ENCODE measurements at regions of chr6 and their contacts with region 1.

Region 1: DNA sequence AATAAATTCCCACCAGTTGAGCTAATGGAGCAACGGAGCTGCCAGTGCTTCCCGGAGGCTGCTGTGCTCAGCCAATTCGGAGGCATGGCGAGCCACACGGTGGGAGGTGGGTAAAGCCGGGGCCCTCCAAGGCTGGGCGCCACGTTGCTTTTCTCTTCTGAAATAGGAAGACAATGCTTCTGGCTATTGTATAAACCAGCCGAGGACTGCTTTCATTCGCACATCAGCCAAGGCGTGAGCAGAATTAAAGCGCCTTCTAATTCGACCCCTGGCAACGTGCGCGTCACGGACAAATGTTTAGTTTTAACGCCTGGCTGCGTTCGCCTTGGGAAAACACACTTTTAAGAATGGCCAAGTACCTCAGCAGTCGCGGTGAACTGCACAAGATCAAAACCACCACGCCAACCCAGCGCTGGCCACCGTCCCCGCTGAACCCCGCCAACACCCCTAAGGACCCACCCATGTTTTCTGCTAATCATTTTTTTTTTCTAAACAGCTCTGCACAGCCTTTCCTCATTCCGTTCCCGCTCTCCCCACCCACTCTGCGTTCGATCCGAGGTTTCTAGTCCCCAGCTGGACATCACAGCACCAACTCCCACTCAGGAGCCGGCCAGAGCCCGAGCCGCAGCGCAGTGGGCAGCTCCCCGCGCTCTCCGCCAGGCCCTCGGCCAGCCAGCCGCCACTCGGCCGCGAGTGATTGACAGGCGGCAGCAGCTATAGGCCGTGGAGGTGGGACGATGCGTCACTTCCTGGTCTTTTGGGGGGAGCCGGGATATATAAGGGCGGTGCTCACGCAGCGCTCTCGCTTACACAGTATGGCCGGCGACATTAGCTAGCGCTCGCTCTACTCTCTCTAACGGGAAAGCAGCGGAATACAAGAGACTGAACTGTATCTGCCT is at the start of gene AMD1:
- DNase-seq: peak; percentile 94
- H3K4me3 Mint-ChIP-seq: peak within 1 kb of the TSS; percentile 95
- H3K27ac Mint-ChIP-seq: peak within 1 kb of the TSS; percentile 98
- H3K4me1 Mint-ChIP-seq: peaks cover 26% of the 10 kb centered on the region
- H3K27me3 Mint-ChIP-seq: no peaks in the 10 kb centered on the region
- total RNA-seq, gene AMD1: 111 TPM in 2 replicates

Region 2: DNA sequence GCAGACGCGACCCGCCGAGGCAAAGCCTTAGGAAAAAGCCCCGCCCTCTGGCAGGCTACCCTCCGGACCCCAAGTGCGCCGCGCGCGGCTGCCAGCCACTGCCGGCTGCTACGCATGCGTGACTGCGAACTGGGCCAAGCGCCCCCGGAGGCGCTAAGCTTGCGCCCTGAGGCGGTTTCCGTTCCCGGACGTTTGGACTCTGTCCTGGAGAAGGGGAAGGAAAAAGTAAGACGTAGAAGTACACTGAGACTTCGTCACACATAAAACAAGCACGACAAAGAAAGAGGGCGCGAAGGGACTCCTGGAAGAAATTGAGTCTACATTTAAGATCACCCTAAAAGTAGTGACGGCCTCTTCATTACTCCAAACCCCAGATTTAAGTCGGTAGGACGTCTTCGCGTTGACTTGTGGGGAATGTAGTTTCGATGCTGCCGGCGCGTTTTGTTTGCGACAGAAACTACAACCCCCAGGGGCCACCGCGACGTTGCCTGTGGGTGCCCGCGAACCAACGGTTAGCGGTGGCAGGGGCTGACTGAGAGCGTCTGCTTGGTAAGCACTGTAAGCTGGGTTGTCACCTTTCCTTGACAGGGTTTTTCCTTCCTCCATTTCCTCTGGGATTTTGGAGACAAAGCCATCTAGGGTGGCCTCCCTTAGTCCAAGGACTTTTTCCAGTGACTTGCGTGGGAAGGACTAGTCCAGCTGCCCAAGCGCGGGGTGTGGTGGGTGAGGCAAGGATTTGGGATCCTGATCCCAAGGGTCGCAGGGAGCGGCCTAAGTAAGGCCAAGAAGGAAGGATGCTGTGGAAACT is 1779.0 kb before region 1 on chr6 and contains the start of gene CEP57L1:
- intact Hi-C with region 1: loop called (anchors 10 kb)
- DNase-seq: peak; percentile 92
- H3K4me3 Mint-ChIP-seq: peak within 1 kb of the TSS; percentile 93
- H3K27ac Mint-ChIP-seq: peak within 1 kb of the TSS; percentile 99
- H3K4me1 Mint-ChIP-seq: peaks cover 45% of the 10 kb centered on the region
- H3K27me3 Mint-ChIP-seq: no peaks in the 10 kb centered on the region
- total RNA-seq, gene CEP57L1: 18.2 and 25.4 TPM in 2 replicates

Region 3: DNA sequence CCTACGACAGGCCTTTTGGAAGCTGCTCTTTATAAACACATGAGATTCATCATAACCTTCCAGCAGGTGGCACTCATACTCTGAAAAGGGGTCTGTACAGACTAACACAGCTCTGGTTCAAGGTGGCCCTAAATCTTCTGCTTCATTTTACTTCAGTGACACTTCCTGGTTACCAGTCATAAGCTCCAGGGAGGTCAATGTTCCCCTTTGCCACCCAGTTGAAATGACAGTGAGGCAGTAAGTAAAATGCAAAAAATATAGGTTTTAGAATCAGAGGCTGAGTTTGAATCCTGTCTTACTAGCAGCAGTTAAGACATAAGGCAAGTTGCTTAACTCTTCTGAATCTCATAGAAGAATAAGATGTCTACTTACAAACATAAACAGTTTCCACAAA is 191.8 kb before region 1 on chr6:
- intact Hi-C with region 1: loop called (anchors 1 kb)
- DNase-seq: peak; percentile 40
- H3K4me3 Mint-ChIP-seq: no peak overlapping the region
- H3K27ac Mint-ChIP-seq: peak overlapping the region; percentile 62
- H3K4me1 Mint-ChIP-seq: peaks cover 30% of the 10 kb centered on the region
- H3K27me3 Mint-ChIP-seq: no peaks in the 10 kb centered on the region

Region 4: DNA sequence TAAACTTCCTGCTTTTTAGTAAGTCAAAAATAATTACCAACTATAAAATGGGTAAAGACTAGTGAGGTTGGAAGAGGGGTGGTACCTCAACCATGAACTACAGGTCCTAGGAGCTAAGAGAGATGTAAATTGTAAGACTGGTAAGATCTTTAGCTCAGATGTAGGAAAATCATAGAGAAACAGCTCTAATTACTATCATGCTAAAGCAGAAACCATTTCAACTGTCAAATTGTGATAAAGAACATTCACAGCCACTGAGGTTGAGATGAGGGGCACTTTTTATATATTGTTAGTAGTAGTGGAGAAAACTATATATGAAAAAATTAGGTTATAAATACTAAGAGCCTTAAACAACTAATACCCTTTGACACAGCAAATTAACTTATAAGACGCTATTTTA is 79.0 kb before region 1 on chr6:
- intact Hi-C with region 1: no loop called
- DNase-seq: no peak
- H3K4me3 Mint-ChIP-seq: no peak overlapping the region
- H3K27ac Mint-ChIP-seq: no peak overlapping the region
- H3K4me1 Mint-ChIP-seq: no peaks in the 10 kb centered on the region
- H3K27me3 Mint-ChIP-seq: no peaks in the 10 kb centered on the region

Region 5: DNA sequence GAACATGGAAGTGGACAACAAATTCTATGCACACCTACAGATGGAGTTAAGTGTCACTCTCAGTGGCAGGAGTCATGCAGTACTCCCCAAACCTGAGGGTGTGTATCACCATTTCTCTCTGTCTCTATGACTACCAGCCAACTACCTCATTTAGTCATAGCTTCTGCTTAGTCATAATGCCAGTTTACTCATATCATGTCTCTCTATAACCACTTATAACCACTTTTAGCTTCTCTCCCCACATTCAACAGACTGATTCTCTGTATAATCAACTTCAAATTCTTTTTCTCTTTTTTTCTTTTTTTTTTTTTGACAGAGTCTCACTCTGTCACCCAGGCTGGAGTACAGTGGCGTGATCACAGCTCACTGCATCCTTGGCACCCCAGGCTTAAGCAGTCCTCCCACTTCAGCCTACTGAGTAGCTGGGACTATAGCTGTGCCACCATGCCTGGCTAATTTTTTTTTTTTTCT is 70.5 kb after region 1 on chr6:
- intact Hi-C with region 1: loop called (anchors 1 kb)
- DNase-seq: peak; percentile 44
- H3K4me3 Mint-ChIP-seq: peak overlapping the region; percentile 10
- H3K27ac Mint-ChIP-seq: peak overlapping the region; percentile 83
- H3K4me1 Mint-ChIP-seq: peaks cover 11% of the 10 kb centered on the region
- H3K27me3 Mint-ChIP-seq: no peaks in the 10 kb centered on the region

Region 6: GRCh38 chr6:110981202-110981600 is 107.0 kb after region 1 on chr6:
- intact Hi-C with region 1: loop called (anchors 1 kb)
- DNase-seq: no peak
- H3K4me3 Mint-ChIP-seq: peak overlapping the region; percentile 97
- H3K27ac Mint-ChIP-seq: peak overlapping the region; percentile 98
- H3K4me1 Mint-ChIP-seq: peaks cover 30% of the 10 kb centered on the region
- H3K27me3 Mint-ChIP-seq: no peaks in the 10 kb centered on the region

Region 7: DNA sequence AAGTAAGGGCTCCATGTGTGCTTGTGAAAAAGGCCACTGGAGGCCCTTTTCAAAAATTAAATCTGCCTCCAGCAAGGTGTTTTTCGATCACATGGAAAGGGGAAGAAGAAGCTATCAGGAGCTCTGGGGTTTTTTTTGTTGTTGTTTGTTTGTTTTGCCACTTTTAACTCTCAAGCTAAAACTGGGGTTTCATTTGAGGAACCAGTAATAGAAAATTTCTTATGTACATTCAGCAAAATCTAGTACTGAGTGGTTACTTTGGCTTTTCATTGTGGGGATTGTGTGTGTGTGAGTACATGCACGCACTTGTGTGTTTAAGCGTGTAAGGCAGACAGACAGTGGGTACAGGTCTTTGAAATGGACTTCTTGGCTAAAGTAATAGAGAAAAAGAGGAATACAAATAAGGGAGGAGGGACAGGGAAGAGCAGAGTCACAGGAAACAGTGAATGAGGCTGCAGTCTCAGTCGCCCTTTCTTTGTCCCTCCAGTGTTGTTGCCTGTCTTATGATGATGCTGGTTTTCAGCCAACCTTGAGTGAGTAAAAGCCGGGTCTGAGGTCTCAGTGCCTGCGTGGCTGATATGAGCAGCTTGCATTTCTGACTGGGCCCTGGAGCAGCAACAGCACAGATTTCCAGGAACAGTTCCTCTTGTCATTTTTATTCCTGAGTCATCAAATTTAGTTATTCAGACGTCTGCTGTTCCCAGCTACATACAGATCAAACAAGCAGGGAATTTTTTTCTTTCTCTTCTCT is 239.3 kb after region 1 on chr6:
- intact Hi-C with region 1: no loop called
- DNase-seq: no peak
- H3K4me3 Mint-ChIP-seq: no peak overlapping the region
- H3K27ac Mint-ChIP-seq: peak overlapping the region; percentile 70
- H3K4me1 Mint-ChIP-seq: peaks cover 12% of the 10 kb centered on the region
- H3K27me3 Mint-ChIP-seq: no peaks in the 10 kb centered on the region